Gastrocnemius medialis (tissue), 4 donors: ENCODE measurements at regions of chr1 and their contacts with region 1.

Region 1: GRCh38 chr1:178031856-178032320 is 62.0 kb upstream of the RASAL2 start:
- DNase-seq: peak; percentile 56 to 84
- ATAC-seq: peak in 1 of 2 donors; percentile 78
- H3K4me3 ChIP-seq: no peak overlapping the region
- H3K27ac ChIP-seq: peak overlapping the region in 3 of 4 donors; percentile 48 to 84 (median 72)
- H3K4me1 ChIP-seq: peaks cover 47 to 66% of the 10 kb centered on the region in 2 donors
- H3K27me3 ChIP-seq: no peaks in the 10 kb centered on the region
- CTCF ChIP-seq: peak; percentile 54 to 86 (median 73)
- POLR2A ChIP-seq: no peak

Region 2: GRCh38 chr1:177959811-177960515 is 71.9 kb before region 1 on chr1:
- in situ Hi-C with region 1: loop called in 1 of 4 experiments (anchors 10 kb)
- intact Hi-C with region 1: no loop called
- DNase-seq: no peak
- ATAC-seq: peak; percentile 64 to 87
- H3K4me3 ChIP-seq: no peak overlapping the region
- H3K27ac ChIP-seq: no peak overlapping the region
- H3K4me1 ChIP-seq: no peaks in the 10 kb centered on the region
- H3K27me3 ChIP-seq: no peaks in the 10 kb centered on the region
- CTCF ChIP-seq: peak in 3 of 5 experiments; percentile 14 to 58 (median 50)
- POLR2A ChIP-seq: no peak

Region 3: GRCh38 chr1:177996957-177997356 is 34.9 kb before region 1 on chr1:
- in situ Hi-C with region 1: no loop called
- intact Hi-C with region 1: loop called (anchors 5 kb)
- DNase-seq: no peak
- ATAC-seq: peak in 1 of 2 donors; percentile 16
- H3K4me3 ChIP-seq: no peak overlapping the region
- H3K27ac ChIP-seq: peak overlapping the region; percentile 83 to 90 (median 86)
- H3K4me1 ChIP-seq: peaks cover 47 to 54% of the 10 kb centered on the region in 2 donors
- H3K27me3 ChIP-seq: no peaks in the 10 kb centered on the region
- CTCF ChIP-seq: no peak
- POLR2A ChIP-seq: no peak

Region 4: GRCh38 chr1:178011465-178011828 is 20.4 kb before region 1 on chr1:
- in situ Hi-C with region 1: no loop called
- intact Hi-C with region 1: loop called (anchors 2 kb)
- DNase-seq: peak; percentile 55 to 67
- ATAC-seq: peak; percentile 100
- H3K4me3 ChIP-seq: no peak overlapping the region
- H3K27ac ChIP-seq: peak overlapping the region; percentile 65 to 84 (median 78)
- H3K4me1 ChIP-seq: peaks cover 13 to 22% of the 10 kb centered on the region in 2 donors
- H3K27me3 ChIP-seq: no peaks in the 10 kb centered on the region
- CTCF ChIP-seq: no peak
- POLR2A ChIP-seq: no peak

Region 5: GRCh38 chr1:178055779-178056471 is 24.0 kb after region 1 on chr1:
- in situ Hi-C with region 1: no loop called
- intact Hi-C with region 1: loop called (anchors 2 kb)
- DNase-seq: peak in 1 of 2 donors; percentile 18
- ATAC-seq: peak in 1 of 2 donors; percentile 55
- H3K4me3 ChIP-seq: no peak overlapping the region
- H3K27ac ChIP-seq: peak overlapping the region; percentile 63 to 78 (median 71)
- H3K4me1 ChIP-seq: peaks cover 32 to 69% of the 10 kb centered on the region in 2 donors
- H3K27me3 ChIP-seq: no peaks in the 10 kb centered on the region
- CTCF ChIP-seq: peak in 2 of 5 experiments; percentile 35 to 40
- POLR2A ChIP-seq: no peak

Region 6: DNA sequence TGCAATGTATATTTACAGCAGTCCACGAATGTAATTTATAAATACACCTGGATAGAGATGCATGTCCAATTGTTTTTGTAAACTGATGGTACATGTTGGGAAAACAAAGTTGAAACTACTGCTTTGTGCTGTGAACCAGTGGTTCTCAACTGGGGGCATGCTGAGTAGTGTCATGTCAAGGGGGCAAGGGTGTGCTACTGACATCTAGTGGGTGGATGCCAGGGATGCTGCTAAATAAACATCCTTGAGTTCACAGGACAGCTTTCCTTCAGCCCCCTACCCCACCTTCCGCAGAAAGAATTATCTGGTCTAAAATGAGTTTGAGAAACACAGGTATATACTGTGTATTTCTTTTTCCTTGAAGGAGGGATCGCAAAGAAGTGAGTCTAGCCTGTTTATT is 157.9 kb after region 1 on chr1:
- in situ Hi-C with region 1: no loop called
- intact Hi-C with region 1: loop called (anchors 5 kb)
- DNase-seq: peak in 1 of 2 donors; percentile 18
- ATAC-seq: peak in 1 of 2 donors; percentile 46
- H3K4me3 ChIP-seq: no peak overlapping the region
- H3K27ac ChIP-seq: no peak overlapping the region
- H3K4me1 ChIP-seq: peaks cover 0 to 7% of the 10 kb centered on the region in 2 donors
- H3K27me3 ChIP-seq: no peaks in the 10 kb centered on the region
- CTCF ChIP-seq: peak in 3 of 5 experiments; percentile 27 to 59 (median 29)
- POLR2A ChIP-seq: no peak

Region 7: GRCh38 chr1:178282949-178283367 is 251.1 kb after region 1 on chr1:
- in situ Hi-C with region 1: loop called in 2 of 4 experiments (anchors 10 to 25 kb)
- intact Hi-C with region 1: no loop called
- DNase-seq: no peak
- ATAC-seq: no peak
- H3K4me3 ChIP-seq: no peak overlapping the region
- H3K27ac ChIP-seq: no peak overlapping the region
- H3K4me1 ChIP-seq: peaks cover 3% of the 10 kb centered on the region in 2 donors
- H3K27me3 ChIP-seq: no peaks in the 10 kb centered on the region
- CTCF ChIP-seq: peak in 1 of 5 experiments; percentile 35
- POLR2A ChIP-seq: no peak